HEK293 (cell line): ENCODE measurements at regions of chr11 and their contacts with region 1.

Region 1: DNA sequence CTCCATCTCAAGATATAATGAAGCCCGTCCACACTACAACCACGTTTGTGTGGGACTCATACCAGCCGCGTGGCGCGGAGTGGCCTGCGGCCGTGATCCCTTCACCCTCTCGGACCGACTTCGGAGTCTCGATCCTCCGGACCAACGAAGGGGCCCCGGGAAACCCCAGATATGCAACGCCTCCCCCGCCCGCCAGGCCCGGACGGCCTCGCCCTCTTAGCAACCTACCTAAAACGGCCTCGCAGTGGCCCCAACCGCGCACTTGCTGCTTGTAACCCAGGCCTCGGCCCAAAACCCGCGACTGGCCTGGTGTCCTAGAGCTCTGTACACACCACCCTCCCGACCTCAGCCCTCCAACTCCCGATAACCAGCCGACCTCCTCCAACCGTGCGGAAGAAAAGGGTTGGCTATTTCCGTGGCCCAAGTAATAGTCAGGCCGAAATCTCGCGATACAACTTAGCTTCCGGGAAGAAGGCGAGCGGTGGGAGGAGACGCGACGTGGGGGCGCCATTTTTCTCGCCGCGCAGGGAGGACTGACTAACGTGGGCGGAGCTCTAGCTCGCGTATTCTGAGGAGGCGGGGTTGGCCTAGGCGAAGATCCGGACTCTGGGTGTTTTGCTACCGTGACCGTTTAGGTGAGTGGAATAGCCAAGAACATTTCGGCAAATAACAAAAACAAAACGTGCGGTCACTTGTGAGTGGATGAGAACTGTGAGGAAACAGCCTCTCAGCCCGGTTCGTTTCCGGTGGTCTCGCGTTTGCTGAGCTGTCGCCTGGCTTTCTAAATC is at the starts of genes C11orf54 and TAF1D:
- H3K4me3 ChIP-seq: peak within 1 kb of the TSS; percentile 96
- H3K27ac ChIP-seq: peak within 1 kb of the TSS; percentile 80
- H3K4me1 ChIP-seq: no peaks in the 10 kb centered on the region
- CTCF ChIP-seq: no peak; the same call in 1 of the 2 replicates

Region 2: DNA sequence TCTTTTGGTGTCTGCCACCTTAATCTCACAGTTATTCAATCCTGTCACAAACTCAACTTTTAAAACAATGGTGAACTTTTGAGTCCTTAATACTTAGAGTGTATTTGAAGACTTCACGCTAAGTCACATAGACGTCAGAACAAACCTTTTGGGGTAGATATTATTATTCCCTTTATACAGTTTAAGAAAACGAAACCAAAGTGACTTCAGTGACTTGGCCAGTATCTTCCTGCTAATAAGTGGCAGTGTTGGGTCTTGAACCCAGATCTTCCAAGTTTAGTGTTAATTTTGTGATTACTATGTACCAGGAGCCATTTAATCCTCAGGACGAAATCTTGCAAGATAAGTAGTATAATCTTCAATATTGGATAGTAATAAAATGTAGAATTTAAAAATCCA is 79.1 kb before region 1 on chr11:
- CTCF ChIA-PET with region 1: no interaction called
- POLR2A ChIA-PET with region 1: interaction called, 11 read pairs
- H3K4me3 ChIP-seq: peak overlapping the region; percentile 89
- H3K27ac ChIP-seq: peak overlapping the region; percentile 81
- H3K4me1 ChIP-seq: peaks cover 6% of the 10 kb centered on the region; the same call in 1 of the 2 replicates
- CTCF ChIP-seq: no peak

Region 3: DNA sequence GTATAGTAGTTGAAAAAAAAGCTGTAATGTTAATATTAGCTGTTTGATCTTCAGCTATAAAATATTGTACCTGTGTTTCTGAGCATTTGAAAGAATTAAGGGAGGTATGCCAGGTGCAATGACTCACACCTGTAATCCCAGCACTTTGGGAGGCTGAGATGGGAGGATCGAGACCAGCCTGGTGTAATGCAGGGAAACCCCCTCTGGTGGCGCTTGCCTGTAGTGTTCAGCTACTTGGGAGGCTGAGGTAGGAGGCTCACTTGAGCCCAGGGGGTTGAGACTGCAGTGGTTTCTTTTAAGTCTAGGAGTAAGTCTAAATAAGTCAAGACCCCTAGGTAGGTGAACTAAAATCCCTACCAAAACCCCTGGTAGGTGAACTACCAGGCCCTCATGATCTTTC is 37.1 kb before region 1 on chr11:
- CTCF ChIA-PET with region 1: no interaction called
- POLR2A ChIA-PET with region 1: no interaction called
- H3K4me3 ChIP-seq: no peak overlapping the region
- H3K27ac ChIP-seq: no peak overlapping the region
- H3K4me1 ChIP-seq: no peaks in the 10 kb centered on the region
- CTCF ChIP-seq: no peak

Region 4: GRCh38 chr11:93727985-93728791 is 13.1 kb before region 1 on chr11:
- CTCF ChIA-PET with region 1: interaction called, 3 read pairs
- POLR2A ChIA-PET with region 1: interaction called, 48 read pairs
- H3K4me3 ChIP-seq: no peak overlapping the region
- H3K27ac ChIP-seq: no peak overlapping the region
- H3K4me1 ChIP-seq: no peaks in the 10 kb centered on the region
- CTCF ChIP-seq: no peak

Region 5: GRCh38 chr11:93784152-93784934 is 43.1 kb after region 1 on chr11 and contains the start of gene MED17:
- CTCF ChIA-PET with region 1: interaction called, 4 read pairs
- POLR2A ChIA-PET with region 1: interaction called, 149 read pairs
- H3K4me3 ChIP-seq: peak within 1 kb of the TSS; percentile 98
- H3K27ac ChIP-seq: peak within 1 kb of the TSS; percentile 79
- H3K4me1 ChIP-seq: no peaks in the 10 kb centered on the region
- CTCF ChIP-seq: peak; percentile 54; the same call in 1 of the 2 replicates